ENCODE measurements at regions of chr17 and their contacts with region 1.

Region 1: DNA sequence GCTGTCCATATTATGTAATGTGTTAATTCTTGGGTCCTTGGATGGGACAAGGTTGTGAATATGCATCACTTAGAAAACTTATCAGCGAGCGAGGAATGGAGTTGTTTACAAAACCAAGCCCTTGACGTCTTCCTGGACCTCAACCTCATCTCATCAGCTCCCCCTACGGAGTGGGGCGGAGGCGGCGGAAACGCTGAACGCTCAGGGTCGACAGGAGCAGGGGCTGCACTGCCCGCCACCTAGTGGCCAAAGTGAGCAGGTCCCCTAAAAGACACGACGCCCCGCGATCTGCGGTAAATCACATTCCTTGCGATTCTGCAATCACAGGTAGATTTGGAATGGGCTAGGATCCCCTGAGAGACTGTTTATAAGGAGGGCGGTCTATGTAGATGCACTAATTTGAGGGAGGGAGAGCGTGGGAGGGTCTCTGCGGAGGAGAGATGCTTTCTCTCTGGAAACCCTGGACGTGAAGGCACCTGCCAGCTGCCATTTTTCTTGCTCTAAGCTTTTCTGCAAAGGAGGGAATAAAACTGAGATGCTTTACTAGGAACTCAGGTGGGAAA is 5.4 kb upstream of the ICAM2 start:
- DNase-seq: peak; percentile 84
- ATAC-seq: peak; percentile 97
- H3K4me3 ChIP-seq: peak overlapping the region; percentile 45 to 50
- H3K27ac ChIP-seq: no peak overlapping the region
- H3K4me1 ChIP-seq: peaks cover 3 to 11% of the 10 kb centered on the region in 2 experiments; a peak in 3 of 4 replicates
- H3K27me3 ChIP-seq: no peaks in the 10 kb centered on the region
- CTCF ChIP-seq: peak; percentile 99 to 100 (median 100)
- POLR2A ChIP-seq: peak; percentile 63
- RAD21 ChIP-seq: peak; percentile 88

Region 2: DNA sequence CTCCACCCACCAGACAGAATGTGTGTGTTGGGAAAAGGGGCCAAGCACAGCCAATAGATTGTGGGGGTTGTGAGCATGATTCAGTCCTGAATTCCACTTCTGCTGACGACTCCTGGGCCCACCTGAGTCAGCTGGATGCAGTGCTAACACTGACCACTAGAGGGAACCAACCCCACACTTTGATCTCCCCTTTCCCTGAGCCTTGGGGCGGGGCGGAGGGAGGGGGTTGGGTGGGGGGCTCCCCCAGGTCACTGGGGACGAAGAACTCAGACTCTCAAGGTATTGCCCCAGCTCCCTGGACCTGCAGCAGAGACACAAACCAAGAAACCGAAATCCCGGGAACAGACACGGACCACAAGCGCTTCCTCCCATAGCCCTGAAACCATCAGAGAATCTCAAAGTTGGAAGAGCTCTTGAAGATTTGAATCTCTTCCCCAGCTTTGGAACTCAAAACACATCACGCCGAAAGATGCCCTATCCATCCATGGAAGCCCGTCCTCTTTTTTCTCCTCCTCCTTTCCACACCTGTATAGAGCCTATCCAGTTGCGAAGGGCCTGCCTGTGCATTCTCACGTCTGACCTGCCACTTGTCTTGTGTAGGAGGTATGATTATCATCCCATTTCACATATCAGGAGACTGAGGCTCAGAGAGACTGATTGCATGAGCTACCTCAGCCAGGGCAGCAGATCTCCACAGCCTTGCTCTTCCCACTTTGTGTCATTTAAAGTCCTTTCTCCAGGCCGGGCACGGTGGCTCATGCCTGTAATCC is 114.0 kb before region 1 on chr17:
- CTCF ChIA-PET with region 1: interaction called, 12 read pairs
- POLR2A ChIA-PET with region 1: no interaction called
- RAD21 ChIA-PET with region 1: no interaction called
- intact Hi-C with region 1: no loop called
- DNase-seq: peak; percentile 16
- ATAC-seq: peak; percentile 86
- H3K4me3 ChIP-seq: no peak overlapping the region
- H3K27ac ChIP-seq: no peak overlapping the region
- H3K4me1 ChIP-seq: no peaks in the 10 kb centered on the region
- H3K27me3 ChIP-seq: no peaks in the 10 kb centered on the region; the same call in 1 of the 2 replicates
- CTCF ChIP-seq: peak; percentile 57 to 78 (median 59); a peak in 4 of 6 replicates
- POLR2A ChIP-seq: no peak
- RAD21 ChIP-seq: peak; percentile 62

Region 3: DNA sequence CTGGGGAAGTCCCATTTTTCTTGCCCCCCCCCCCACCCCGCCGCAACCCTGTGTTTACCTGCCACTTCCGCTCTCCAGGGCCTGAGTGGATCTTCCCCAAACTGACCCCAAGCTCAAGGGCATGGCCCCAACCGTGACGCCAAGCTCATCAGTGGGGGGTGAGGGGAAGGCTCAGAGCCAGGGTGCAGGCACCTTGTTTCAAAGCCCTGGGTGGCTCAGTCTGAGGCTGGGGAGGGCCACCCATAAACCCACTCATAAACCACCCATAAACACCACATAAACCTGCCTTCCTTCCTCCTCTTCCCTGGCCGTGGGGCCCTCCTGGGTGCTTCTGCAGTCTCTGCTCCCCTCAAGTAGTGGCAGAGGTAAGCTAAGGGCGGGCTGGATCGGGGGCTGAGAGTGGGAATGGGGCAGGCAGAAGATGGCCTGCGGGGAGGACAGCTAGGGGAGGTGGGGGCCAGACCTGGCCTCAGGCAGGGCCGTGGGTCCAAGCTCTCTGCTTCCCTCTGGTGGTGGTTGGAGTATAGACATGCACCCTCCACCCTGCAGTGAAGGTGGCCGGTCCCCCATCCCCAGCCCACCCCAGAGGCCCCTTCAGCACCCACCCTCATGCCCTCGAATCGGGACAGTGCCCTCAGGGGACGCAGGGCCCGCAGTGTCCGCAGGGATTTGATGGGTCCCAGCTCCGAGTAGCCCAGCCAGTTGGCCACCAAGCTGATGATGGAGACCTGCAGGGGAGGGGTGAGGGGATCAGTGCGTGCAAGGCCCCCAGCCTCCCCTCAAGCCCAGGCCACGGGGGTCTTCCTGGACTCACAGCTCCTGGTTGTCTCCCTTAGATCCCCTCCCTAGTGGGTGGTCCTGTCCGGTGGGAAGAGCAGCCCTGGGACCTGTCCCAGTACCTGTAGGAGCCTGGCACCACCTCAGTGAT is 79.1 kb before region 1 on chr17:
- CTCF ChIA-PET with region 1: interaction called, 13 read pairs
- POLR2A ChIA-PET with region 1: no interaction called
- RAD21 ChIA-PET with region 1: interaction called in 1 of 2 experiments, 3 read pairs
- intact Hi-C with region 1: no loop called
- DNase-seq: peak; percentile 22
- ATAC-seq: peak; percentile 86
- H3K4me3 ChIP-seq: no peak overlapping the region
- H3K27ac ChIP-seq: no peak overlapping the region
- H3K4me1 ChIP-seq: peaks cover 0 to 10% of the 10 kb centered on the region in 2 experiments; a peak in 1 of 4 replicates
- H3K27me3 ChIP-seq: no peaks in the 10 kb centered on the region
- CTCF ChIP-seq: peak; percentile 58 to 83 (median 83)
- POLR2A ChIP-seq: no peak
- RAD21 ChIP-seq: no peak; the same call in 1 of the 2 replicates

Region 4: DNA sequence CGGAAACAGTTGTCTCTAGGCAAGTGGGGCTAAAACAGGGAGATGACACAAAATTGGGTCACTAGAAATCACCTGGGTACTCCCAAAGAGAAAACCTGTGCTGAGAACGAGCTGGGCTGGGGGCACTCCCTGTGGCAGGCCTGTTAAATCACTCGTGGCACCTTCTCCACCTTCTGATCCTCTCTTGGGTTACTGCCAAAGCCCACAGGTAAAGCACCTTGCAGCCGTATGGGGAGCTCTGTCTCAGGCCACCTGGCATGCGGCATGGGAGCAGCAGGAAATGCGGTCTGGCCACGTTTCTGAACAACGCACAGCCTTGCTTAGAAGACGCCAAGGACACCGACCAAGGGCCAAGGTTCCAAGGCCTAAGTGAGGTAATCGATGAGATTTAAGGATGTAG is 16.1 kb after region 1 on chr17:
- CTCF ChIA-PET with region 1: interaction called, 17 read pairs
- POLR2A ChIA-PET with region 1: no interaction called
- RAD21 ChIA-PET with region 1: no interaction called
- intact Hi-C with region 1: no loop called
- DNase-seq: no peak
- ATAC-seq: no peak
- H3K4me3 ChIP-seq: no peak overlapping the region
- H3K27ac ChIP-seq: no peak overlapping the region
- H3K4me1 ChIP-seq: no peaks in the 10 kb centered on the region
- H3K27me3 ChIP-seq: no peaks in the 10 kb centered on the region
- CTCF ChIP-seq: no peak
- POLR2A ChIP-seq: no peak
- RAD21 ChIP-seq: no peak

Region 5: DNA sequence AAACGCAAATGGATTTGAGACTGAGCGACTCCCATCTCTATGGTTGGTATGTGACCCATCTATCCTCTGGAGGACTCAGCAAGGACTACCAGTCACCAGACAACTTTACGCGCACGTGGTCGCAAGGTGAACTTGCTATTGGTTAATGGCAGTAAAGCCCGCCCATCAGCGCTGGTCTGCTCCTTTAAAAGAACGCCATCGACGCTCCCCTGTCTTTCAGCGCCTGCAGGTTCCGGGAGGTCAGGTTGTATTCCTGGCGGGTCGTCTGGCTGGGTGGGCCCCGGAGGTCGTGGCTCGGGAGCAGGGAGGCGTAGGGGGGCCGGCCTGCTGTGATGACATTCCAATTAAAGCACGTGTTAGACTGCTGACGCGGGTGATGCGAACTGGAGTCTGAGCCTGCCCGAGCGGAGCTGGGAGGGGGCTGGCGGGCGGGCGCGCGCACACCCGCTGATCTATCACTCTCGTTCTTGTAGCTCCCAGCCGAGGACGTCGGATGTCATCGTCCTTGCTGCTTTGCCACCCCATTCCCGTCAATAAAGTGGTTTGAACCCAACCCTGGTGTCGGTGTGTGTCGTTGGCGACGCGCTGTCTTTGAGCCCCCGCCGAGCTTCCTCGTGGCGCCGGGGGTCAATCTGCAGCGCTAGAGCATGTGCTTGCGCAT is 120.1 kb after region 1 on chr17:
- CTCF ChIA-PET with region 1: interaction called, 10 read pairs
- POLR2A ChIA-PET with region 1: interaction called, 10 read pairs
- RAD21 ChIA-PET with region 1: no interaction called
- intact Hi-C with region 1: no loop called
- DNase-seq: peak; percentile 100
- ATAC-seq: peak; percentile 88
- H3K4me3 ChIP-seq: peak overlapping the region; percentile 74 to 88
- H3K27ac ChIP-seq: peak overlapping the region; percentile 95
- H3K4me1 ChIP-seq: peaks cover 6 to 29% of the 10 kb centered on the region in 2 experiments; a peak in 3 of 4 replicates
- H3K27me3 ChIP-seq: no peaks in the 10 kb centered on the region
- CTCF ChIP-seq: no peak
- POLR2A ChIP-seq: peak; percentile 100
- RAD21 ChIP-seq: no peak